ENCODE measurements at regions of chr22 and their contacts with region 1.

Region 1: GRCh38 chr22:23849009-23850006 is 8.4 kb upstream of the SLC2A11 start:
- DNase-seq: peak; percentile 95

Region 2: DNA sequence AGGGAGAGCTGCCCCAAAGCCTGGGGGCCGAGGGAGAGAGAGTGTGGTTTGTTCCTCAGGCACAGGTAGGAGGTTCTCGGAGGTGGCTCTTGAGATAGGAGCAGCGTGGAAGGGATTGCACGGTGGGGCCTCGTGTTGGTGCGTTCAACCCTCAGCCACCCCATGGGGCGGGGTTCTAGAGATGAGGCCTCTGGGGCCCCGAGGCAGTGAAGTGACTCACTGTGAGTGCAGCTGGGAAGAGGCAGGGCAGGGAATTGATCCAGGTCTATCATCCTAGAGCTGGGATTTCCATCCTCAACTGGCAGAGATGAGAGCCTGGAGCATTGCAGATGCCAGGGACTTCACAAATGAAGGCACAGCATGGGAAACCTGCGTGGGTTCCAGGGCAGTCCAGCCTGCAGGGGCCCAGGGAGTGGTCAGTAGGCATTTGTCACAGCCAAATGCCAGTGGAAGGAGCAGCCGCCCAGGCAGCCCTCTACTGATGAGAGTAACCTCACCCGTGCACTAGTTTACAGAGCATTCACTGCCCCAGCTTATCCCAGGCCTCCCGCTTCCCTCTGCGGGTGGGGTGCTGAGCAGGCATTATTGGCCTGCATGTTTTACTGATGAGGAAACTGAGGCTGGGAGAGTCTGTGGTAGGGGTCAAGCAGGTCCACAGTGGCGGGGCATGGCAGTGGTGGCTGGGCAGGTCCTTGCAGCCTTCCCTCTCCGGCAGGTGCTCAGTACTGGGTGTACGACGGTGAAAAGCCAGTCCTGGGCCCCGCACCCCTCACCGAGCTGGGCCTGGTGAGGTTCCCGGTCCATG is 67.6 kb before region 1 on chr22:
- intact Hi-C with region 1: loop called in 1 of 2 experiments (anchors 5 kb)
- DNase-seq: peak; percentile 90

Measured in posterior vena cava (tissue), 2 donors.